Natural killer cell (primary cell): ENCODE measurements at regions of chr1 and their contacts with region 1.

Region 1: DNA sequence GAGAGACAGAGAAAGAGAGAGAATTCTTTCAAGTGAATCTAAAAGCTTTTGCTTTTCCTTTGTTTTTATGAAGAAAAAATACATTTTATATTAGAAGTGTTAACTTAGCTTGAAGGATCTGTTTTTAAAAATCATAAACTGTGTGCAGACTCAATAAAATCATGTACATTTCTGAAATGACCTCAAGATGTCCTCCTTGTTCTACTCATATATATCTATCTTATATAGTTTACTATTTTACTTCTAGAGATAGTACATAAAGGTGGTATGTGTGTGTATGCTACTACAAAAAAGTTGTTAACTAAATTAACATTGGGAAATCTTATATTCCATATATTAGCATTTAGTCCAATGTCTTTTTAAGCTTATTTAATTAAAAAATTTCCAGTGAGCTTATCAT is 117.6 kb downstream of the PTPRC start:
- DNase-seq: peak in 1 of 2 donors; percentile 35
- ATAC-seq: peak; percentile 49 to 79 (median 54)
- H3K4me3 ChIP-seq: no peak overlapping the region
- H3K4me3 Mint-ChIP-seq: no peak overlapping the region
- H3K27ac ChIP-seq: no peak overlapping the region
- H3K27ac Mint-ChIP-seq: peak overlapping the region; percentile 67 to 89
- H3K4me1 ChIP-seq: no peaks in the 10 kb centered on the region
- H3K4me1 Mint-ChIP-seq: peaks cover 26 to 34% of the 10 kb centered on the region in 2 donors
- H3K27me3 ChIP-seq: no peaks in the 10 kb centered on the region
- H3K27me3 Mint-ChIP-seq: no peaks in the 10 kb centered on the region
- CTCF ChIP-seq: peak; percentile 24

Region 2: DNA sequence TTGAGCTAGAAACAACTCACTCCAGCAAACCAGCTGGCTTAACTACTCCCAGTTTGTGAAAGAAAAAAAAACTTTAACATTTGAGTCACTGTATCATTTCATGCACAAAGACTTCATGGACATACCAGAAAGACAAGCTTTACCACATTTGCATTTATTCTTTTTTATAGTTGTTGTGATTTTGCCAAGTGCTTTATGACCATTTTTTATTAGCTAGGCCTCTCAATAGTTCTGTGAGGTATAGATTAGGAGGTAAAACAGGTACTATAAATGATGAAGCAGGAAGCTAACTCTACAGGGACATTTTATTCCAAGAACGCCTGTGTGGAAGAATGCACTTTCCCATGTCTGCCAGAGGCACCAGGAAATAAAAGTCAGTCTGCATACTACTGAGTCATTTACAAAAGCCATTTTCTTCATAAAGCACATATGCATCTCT is 972.9 kb before region 1 on chr1:
- intact Hi-C with region 1: loop called (anchors 5 kb)
- DNase-seq: no peak
- ATAC-seq: no peak
- H3K4me3 ChIP-seq: no peak overlapping the region
- H3K4me3 Mint-ChIP-seq: no peak overlapping the region
- H3K27ac ChIP-seq: no peak overlapping the region
- H3K27ac Mint-ChIP-seq: no peak overlapping the region
- H3K4me1 ChIP-seq: no peaks in the 10 kb centered on the region
- H3K4me1 Mint-ChIP-seq: peaks cover 8 to 15% of the 10 kb centered on the region in 2 donors
- H3K27me3 ChIP-seq: no peaks in the 10 kb centered on the region
- H3K27me3 Mint-ChIP-seq: no peaks in the 10 kb centered on the region
- CTCF ChIP-seq: no peak

Region 3: GRCh38 chr1:198167436-198167934 is 589.0 kb before region 1 on chr1:
- intact Hi-C with region 1: no loop called
- DNase-seq: peak; percentile 37 to 80
- ATAC-seq: peak; percentile 79 to 92 (median 91)
- H3K4me3 ChIP-seq: no peak overlapping the region
- H3K4me3 Mint-ChIP-seq: peak overlapping the region; percentile 88
- H3K27ac ChIP-seq: peak overlapping the region; percentile 81
- H3K27ac Mint-ChIP-seq: peak overlapping the region; percentile 94 to 96
- H3K4me1 ChIP-seq: peaks cover 50% of the 10 kb centered on the region
- H3K4me1 Mint-ChIP-seq: peaks cover 72% of the 10 kb centered on the region in 2 donors
- H3K27me3 ChIP-seq: no peaks in the 10 kb centered on the region
- H3K27me3 Mint-ChIP-seq: no peaks in the 10 kb centered on the region
- CTCF ChIP-seq: no peak

Region 4: DNA sequence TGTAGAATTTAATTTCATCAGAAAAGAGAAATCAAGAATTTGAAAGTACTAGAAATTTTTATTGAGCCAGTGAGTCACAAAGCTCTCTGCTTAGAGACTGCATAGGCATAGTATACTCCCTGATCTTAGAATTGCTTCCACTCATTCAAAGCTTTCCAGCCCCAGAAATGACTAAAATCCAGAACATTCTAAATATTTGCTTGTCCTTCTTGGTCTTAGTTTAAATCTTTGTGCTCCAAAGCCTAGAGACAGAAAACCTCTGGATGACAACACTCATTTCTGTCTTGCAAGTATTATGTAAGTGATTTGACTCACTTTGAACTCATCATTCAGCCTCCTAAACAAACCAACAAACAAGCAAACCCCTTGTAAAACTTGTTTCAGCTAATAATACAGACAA is 43.4 kb before region 1 on chr1:
- intact Hi-C with region 1: loop called (anchors 5 kb)
- DNase-seq: no peak
- ATAC-seq: no peak
- H3K4me3 ChIP-seq: no peak overlapping the region
- H3K4me3 Mint-ChIP-seq: no peak overlapping the region
- H3K27ac ChIP-seq: no peak overlapping the region
- H3K27ac Mint-ChIP-seq: peak overlapping the region; percentile 82 to 84
- H3K4me1 ChIP-seq: no peaks in the 10 kb centered on the region
- H3K4me1 Mint-ChIP-seq: peaks cover 34 to 52% of the 10 kb centered on the region in 2 donors
- H3K27me3 ChIP-seq: no peaks in the 10 kb centered on the region
- H3K27me3 Mint-ChIP-seq: no peaks in the 10 kb centered on the region
- CTCF ChIP-seq: no peak

Region 5: DNA sequence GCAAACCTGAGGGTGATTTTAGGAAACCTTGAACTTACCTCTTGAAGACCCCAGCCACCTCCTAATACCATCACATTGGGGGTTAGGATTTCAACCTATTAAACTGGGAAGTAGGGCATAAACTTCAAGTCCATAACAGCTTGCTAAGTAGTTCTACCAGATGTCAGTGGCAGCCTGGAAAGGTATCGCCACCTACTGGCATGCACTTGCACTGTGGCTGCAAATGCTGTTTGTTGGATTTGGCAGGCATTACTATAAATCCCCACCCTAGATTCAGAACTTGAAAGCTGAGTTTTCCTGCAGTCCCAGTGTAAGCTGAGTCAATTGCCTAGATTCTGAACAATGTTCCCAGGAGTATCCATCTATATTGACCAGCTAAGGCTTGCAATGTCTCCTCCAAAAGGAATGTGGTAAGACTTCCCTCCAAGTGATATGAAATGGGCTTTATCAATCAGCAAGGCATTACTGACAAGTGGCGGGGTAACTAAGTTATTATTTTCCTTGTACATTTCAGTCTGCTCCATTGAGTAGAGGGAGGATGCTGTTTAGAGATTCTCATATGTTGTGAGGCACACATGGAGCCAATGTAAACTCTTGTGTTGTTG is 356.9 kb after region 1 on chr1:
- intact Hi-C with region 1: loop called (anchors 5 kb)
- DNase-seq: peak; percentile 52 to 81
- ATAC-seq: peak; percentile 77 to 87 (median 84)
- H3K4me3 ChIP-seq: no peak overlapping the region
- H3K4me3 Mint-ChIP-seq: no peak overlapping the region
- H3K27ac ChIP-seq: no peak overlapping the region
- H3K27ac Mint-ChIP-seq: peak overlapping the region in 1 of 2 donors; percentile 9
- H3K4me1 ChIP-seq: no peaks in the 10 kb centered on the region
- H3K4me1 Mint-ChIP-seq: peaks cover 11 to 18% of the 10 kb centered on the region in 2 donors
- H3K27me3 ChIP-seq: no peaks in the 10 kb centered on the region
- H3K27me3 Mint-ChIP-seq: no peaks in the 10 kb centered on the region
- CTCF ChIP-seq: peak; percentile 95